Activated B cell treated with CpG ODN at 0.5 μM for 24 hours (primary cell): ENCODE measurements at regions of chr11 and their contacts with region 1.

Region 1: DNA sequence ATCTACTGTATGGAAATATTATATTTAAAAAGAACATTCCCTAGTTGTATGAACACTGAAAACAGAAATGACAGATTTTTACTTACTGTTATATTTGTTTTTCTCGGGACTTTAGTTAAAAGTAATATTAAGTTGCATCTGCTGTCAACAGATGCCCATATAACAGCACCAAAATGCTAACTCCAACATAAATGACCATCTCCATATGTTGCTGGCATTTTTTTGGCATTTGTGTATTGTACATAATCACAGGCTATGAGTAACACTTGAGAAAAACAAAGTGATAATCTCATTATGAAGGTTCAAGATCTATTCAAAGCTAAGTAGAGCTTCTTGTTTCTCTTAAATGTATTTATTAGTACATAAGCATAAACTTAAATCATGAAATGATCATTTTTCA is 172.0 kb downstream of the CNTN5 start:
- DNase-seq: no peak
- ATAC-seq: no peak
- H3K4me3 Mint-ChIP-seq: no peak overlapping the region
- H3K27ac Mint-ChIP-seq: no peak overlapping the region
- H3K4me1 Mint-ChIP-seq: no peaks in the 10 kb centered on the region
- H3K27me3 Mint-ChIP-seq: no peaks in the 10 kb centered on the region
- CTCF ChIP-seq: no peak

Region 2: DNA sequence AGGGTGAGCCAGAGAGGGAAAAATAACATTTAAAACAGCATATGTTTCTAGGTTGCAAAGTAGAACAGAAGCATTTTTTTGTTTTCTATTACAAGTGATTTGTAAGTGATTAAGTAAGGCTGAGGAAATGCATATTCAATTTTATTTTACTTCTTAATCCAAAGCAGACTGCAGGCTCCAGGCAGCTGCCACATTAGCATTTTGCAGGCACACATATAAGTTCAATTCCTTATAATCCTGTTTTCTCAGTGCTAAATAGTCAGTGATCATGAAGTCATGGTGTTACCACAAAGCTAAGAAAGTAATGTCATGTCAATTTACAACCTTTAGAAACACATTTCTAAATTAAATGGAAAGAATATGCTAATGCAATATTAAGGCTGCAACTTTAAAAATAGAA is 22.1 kb before region 1 on chr11:
- CTCF ChIA-PET with region 1: no interaction called
- POLR2A ChIA-PET with region 1: no interaction called
- intact Hi-C with region 1: loop called (anchors 2 kb)
- DNase-seq: no peak
- ATAC-seq: no peak
- H3K4me3 Mint-ChIP-seq: no peak overlapping the region
- H3K27ac Mint-ChIP-seq: no peak overlapping the region
- H3K4me1 Mint-ChIP-seq: no peaks in the 10 kb centered on the region
- H3K27me3 Mint-ChIP-seq: no peaks in the 10 kb centered on the region
- CTCF ChIP-seq: no peak